Calu3 (cell line): ENCODE measurements at regions of chr3 and their contacts with region 1.

Region 1: DNA sequence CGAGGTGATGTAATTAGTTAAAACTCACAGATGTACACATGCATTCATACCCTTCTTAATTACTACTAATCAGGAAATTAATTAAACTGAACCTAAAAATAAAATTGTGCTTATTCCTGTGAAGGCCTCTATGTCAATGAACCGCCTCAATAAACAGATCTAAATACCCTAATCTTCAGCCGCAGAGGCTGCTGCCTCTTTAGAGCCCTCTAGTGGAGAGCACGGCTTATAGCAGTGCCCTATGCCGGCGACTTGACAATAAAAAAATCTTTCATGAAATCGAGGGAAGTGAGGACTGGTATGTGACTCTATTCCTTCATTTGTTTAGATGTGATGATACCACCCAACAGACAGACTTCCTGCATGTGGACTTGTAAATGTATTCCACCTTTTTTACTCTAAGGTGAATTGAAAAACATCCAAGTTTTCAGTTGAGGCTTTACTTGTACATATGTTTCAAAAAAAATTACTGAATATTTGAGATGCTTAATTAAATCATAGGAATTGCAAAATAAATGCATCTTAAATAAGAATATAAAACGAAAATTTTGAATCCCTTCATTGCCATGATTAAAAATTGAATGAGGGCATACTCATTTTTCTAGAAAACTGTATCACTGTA is 8.3 kb upstream of the EPHA3 start:
- DNase-seq: peak; percentile 55
- H3K4me3 Mint-ChIP-seq: no peak overlapping the region
- H3K27ac Mint-ChIP-seq: no peak overlapping the region
- H3K4me1 Mint-ChIP-seq: peaks cover 29% of the 10 kb centered on the region
- H3K27me3 Mint-ChIP-seq: no peaks in the 10 kb centered on the region
- CTCF ChIP-seq: peak; percentile 54

Region 2: GRCh38 chr3:88203642-88204055 is 895.4 kb before region 1 on chr3:
- CTCF ChIA-PET with region 1: no interaction called
- intact Hi-C with region 1: loop called (anchors 2 kb)
- DNase-seq: peak; percentile 79
- H3K4me3 Mint-ChIP-seq: no peak overlapping the region
- H3K27ac Mint-ChIP-seq: no peak overlapping the region
- H3K4me1 Mint-ChIP-seq: peaks cover 19% of the 10 kb centered on the region
- H3K27me3 Mint-ChIP-seq: no peaks in the 10 kb centered on the region
- CTCF ChIP-seq: peak; percentile 63

Region 3: DNA sequence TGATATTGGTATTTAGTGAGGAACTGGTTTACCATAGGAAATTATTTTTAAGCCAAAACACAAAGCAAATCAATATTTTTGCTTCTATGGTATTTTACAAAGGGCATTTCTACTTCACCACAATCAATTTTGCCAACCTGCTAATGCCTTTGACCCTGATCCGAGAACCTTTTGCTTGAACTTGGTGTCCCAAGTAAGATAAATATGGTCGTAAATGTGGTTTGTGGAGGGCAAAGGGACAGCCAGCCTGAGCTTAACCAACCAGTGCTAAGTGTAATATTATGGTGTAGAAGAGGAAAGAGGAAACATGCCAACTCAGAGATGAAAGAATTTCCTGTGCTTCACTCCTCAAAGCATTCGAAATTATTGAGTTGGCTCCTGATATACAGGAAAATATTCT is 800.9 kb before region 1 on chr3:
- CTCF ChIA-PET with region 1: no interaction called
- intact Hi-C with region 1: loop called (anchors 2 kb)
- DNase-seq: peak; percentile 48
- H3K4me3 Mint-ChIP-seq: peak overlapping the region; percentile 13
- H3K27ac Mint-ChIP-seq: peak overlapping the region; percentile 59
- H3K4me1 Mint-ChIP-seq: peaks cover 15% of the 10 kb centered on the region
- H3K27me3 Mint-ChIP-seq: no peaks in the 10 kb centered on the region
- CTCF ChIP-seq: no peak

Region 4: DNA sequence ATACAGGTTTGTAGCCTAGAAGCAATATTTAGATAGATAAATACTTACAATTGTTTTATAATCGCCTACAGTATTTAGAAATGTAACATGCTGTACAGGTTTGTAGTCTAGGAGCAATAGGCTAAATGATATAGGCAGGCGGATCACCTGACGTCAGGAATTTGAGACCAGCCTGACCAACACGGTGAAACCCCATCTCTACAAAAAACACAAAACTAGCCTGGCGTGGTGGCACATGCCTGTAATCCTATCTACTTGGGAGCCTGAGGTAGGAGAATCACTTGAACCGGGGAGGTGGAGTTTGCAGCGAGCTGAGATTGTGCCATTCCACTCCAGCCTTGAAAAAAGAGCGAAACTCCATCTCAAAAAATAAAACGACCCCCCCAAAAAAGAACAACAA is 366.9 kb before region 1 on chr3:
- CTCF ChIA-PET with region 1: no interaction called
- intact Hi-C with region 1: loop called (anchors 10 kb)
- DNase-seq: no peak
- H3K4me3 Mint-ChIP-seq: no peak overlapping the region
- H3K27ac Mint-ChIP-seq: no peak overlapping the region
- H3K4me1 Mint-ChIP-seq: peaks cover 10% of the 10 kb centered on the region
- H3K27me3 Mint-ChIP-seq: no peaks in the 10 kb centered on the region
- CTCF ChIP-seq: no peak

Region 5: DNA sequence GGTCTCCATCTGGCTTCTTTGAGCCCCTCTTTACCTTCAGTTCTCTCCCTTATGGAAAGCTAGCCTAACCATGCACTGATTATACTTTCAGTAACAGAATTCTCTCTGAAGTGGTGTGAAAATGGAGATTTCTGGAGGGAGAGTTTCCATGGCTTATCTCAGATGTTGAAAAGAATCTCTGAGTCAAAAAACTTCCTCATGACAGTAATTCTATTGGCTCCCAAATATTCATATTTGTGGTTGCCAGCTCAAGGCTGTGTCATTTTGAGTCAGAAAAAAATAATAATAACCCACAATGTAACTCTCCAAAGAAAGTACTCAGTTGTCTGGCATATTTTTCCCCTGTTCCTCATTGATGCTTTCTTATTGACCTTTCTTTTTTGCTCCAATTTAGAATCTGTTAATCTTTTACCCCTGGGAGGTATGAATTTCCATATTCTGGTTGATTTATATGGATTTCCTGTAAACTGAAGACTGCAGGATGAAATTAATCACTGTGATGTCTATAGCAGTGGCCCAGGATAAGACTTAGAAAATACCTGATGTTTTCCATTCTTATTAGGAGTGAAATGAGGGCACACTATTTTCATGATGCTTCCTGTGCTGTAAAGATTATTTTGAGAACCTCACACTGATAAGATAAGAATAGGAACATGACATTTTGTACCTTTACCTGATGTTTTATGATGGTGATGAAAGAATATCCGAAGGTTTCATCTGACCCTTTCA is 141.2 kb before region 1 on chr3:
- CTCF ChIA-PET with region 1: no interaction called
- intact Hi-C with region 1: loop called (anchors 2 kb)
- DNase-seq: peak; percentile 3
- H3K4me3 Mint-ChIP-seq: no peak overlapping the region
- H3K27ac Mint-ChIP-seq: peak overlapping the region; percentile 37
- H3K4me1 Mint-ChIP-seq: peaks cover 20% of the 10 kb centered on the region
- H3K27me3 Mint-ChIP-seq: no peaks in the 10 kb centered on the region
- CTCF ChIP-seq: no peak

Region 6: DNA sequence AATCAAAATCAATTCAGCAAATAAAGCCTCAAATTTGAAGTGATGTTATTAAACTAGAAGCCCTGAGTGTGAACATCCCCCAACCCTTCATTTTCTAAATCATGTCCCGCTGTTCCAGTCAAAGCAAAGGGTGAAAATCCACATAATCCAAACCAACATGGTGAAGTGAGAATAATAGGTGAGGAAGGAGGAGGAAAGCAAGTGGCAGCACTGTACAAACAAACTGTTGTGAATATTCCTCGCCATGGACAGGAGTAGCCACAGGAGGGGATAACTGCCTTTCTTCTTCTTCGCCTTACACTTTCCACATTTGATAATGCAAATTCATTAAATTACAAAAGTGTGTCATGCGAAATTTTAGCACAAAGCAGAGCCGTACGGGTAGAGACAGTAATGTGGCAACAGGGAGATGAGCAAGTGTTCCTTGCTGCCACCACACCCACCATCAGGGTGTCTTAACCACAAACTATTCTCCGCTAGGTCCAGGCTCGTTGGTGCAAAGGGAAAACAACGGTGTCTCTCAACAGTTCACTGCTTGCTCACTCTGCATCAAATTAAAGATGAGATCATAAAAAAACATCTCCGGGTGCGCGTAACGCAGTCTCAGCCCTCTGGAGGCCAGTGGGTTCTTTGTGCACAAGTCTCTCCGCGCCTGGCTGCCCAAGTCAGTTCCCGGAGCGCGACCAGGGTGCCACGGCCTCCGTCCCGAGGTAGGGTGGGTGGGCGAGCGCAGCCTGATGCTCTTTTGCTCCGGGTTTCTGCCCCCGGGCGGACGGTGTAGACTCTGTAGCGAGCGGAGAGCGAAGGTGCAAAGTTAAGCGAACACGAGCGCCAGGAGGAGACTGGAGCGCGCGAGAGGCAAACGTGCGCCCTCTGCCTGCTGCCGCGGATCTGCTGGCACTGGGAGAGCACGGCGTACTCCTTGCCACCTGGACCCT is 15.1 kb after region 1 on chr3:
- CTCF ChIA-PET with region 1: no interaction called
- intact Hi-C with region 1: no loop called
- DNase-seq: peak; percentile 72
- H3K4me3 Mint-ChIP-seq: peak overlapping the region; percentile 71
- H3K27ac Mint-ChIP-seq: peak overlapping the region; percentile 80
- H3K4me1 Mint-ChIP-seq: peaks cover 6% of the 10 kb centered on the region
- H3K27me3 Mint-ChIP-seq: no peaks in the 10 kb centered on the region
- CTCF ChIP-seq: peak; percentile 36

Region 7: GRCh38 chr3:89216016-89216739 is 117.1 kb after region 1 on chr3:
- CTCF ChIA-PET with region 1: no interaction called
- intact Hi-C with region 1: no loop called
- DNase-seq: no peak
- H3K4me3 Mint-ChIP-seq: no peak overlapping the region
- H3K27ac Mint-ChIP-seq: no peak overlapping the region
- H3K4me1 Mint-ChIP-seq: no peaks in the 10 kb centered on the region
- H3K27me3 Mint-ChIP-seq: no peaks in the 10 kb centered on the region
- CTCF ChIP-seq: no peak